Lower leg skin (tissue), 4 donors: ENCODE measurements at regions of chrX and their contacts with region 1.

Region 1: GRCh38 chrX:154873329-154873728 is 12.8 kb upstream of the F8A1 start:
- DNase-seq: no peak
- H3K4me3 ChIP-seq: no peak overlapping the region
- CTCF ChIP-seq: no peak
- POLR2A ChIP-seq: no peak

Region 2: DNA sequence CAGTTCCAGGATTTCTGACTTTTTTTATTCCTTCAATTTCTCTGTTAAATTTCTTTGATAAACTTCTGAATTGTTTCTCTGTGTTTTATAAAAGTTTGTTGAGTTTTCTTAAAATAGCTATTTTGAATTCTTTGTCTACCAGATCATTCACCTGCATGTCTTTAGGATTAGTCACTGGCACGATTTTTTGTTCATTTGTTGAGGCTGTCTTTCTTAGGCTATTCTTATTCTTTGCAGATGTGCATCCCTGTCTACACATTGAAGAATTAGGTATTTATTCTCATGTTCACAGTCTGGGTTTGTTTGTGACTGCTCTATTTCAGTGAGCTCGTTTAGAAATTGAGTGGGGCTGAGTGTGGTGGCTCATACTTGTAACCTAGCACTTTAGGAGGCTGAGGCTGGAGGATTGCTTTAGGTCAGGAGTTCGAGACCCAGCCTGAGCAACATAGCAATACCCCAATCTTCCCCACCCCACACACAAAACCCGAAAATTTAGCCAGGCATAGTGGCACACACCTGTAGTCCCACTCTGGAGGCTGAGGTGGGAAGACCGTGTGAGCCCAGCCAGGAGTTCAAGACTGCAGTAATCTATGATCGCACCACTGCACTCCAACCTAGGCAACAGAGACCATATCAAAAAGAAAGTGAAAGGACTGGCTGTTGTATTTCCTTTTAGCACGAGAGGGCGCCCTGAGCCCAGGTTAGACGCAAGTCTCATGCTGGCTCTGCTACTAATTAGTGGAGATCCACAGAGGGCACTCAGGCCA is 107.2 kb after region 1 on chrX:
- intact Hi-C with region 1: no loop called
- DNase-seq: peak; percentile 67 to 91
- H3K4me3 ChIP-seq: no peak overlapping the region
- CTCF ChIP-seq: no peak
- POLR2A ChIP-seq: no peak

Region 3: GRCh38 chrX:155048977-155049619 is 175.8 kb after region 1 on chrX:
- intact Hi-C with region 1: loop called (anchors 5 kb)
- DNase-seq: no peak
- H3K4me3 ChIP-seq: no peak overlapping the region
- CTCF ChIP-seq: no peak
- POLR2A ChIP-seq: no peak